ENCODE measurements at regions of chr12 and their contacts with region 1.

Region 1: GRCh38 chr12:34218165-34219045 is 196.1 kb downstream of the ALG10 start:
- DNase-seq: peak in 1 of 2 donors; percentile 82
- H3K4me3 ChIP-seq: peak overlapping the region in 1 of 2 donors; percentile 29
- H3K27ac ChIP-seq: no peak overlapping the region
- H3K4me1 ChIP-seq: no peaks in the 10 kb centered on the region
- H3K27me3 ChIP-seq: no peaks in the 10 kb centered on the region
- CTCF ChIP-seq: peak; percentile 66 to 85 (median 70)
- POLR2A ChIP-seq: no peak

Region 2: DNA sequence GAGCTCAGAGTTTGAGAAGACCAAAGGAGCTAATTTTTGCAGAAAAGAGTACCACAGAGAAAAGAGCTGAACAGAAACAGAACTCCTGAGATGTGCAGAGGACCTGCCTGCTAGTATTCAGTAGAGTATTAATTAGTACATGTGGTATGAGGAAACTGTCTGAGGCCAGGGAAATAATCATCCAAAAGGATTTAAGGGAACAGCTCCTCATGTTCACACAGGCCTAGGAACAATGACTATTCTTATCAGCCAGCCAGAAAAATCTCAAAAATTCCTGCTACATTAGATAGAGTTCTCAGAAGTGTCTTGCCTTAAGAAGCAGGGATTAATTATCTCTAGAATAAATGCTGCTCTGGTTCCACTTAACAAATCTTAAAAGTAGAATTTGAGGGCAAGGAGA is 1358.2 kb before region 1 on chr12:
- intact Hi-C with region 1: no loop called
- DNase-seq: no peak
- H3K4me3 ChIP-seq: no peak overlapping the region
- H3K27ac ChIP-seq: no peak overlapping the region
- H3K4me1 ChIP-seq: no peaks in the 10 kb centered on the region
- H3K27me3 ChIP-seq: no peaks in the 10 kb centered on the region
- CTCF ChIP-seq: no peak
- POLR2A ChIP-seq: no peak

Region 3: DNA sequence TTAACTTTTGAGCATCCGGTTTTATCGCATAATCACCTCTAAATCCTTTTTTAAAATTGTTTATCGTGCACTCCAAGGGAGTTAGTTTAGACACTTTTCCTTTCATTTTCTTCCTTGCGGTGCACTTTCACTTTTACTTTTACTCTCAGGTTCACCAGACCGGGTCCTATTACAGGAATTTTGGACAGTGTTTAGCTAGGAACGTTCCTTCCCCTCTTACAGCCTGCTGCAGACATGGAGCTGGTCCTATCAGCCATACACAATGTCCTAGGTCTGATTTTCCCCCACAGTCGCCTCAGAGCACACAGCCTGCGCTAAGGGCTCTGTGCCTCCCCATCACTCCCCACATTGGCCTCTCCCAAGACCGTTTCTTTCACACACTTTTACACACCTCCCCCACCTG is 92.2 kb before region 1 on chr12:
- intact Hi-C with region 1: loop called (anchors 10 kb)
- DNase-seq: no peak
- H3K4me3 ChIP-seq: no peak overlapping the region
- H3K27ac ChIP-seq: no peak overlapping the region
- H3K4me1 ChIP-seq: no peaks in the 10 kb centered on the region
- H3K27me3 ChIP-seq: no peaks in the 10 kb centered on the region
- CTCF ChIP-seq: no peak
- POLR2A ChIP-seq: no peak

Measured in vagina (tissue), 2 donors.